Ascending aorta (tissue), 2 donors: ENCODE measurements at regions of chrX and their contacts with region 1.

Region 1: GRCh38 chrX:150898343-150899190 is at the start of gene CD99L2:
- DNase-seq: peak; percentile 39 to 91
- H3K4me3 ChIP-seq: peak within 1 kb of the TSS; percentile 71 to 83
- H3K27ac ChIP-seq: peak within 1 kb of the TSS; percentile 65 to 71
- H3K4me1 ChIP-seq: no peaks in the 10 kb centered on the region
- H3K27me3 ChIP-seq: no peaks in the 10 kb centered on the region
- CTCF ChIP-seq: no peak
- total RNA-seq, gene CD99L2: 83.4 TPM

Region 2: GRCh38 chrX:149938427-149939270 is 959.9 kb before region 1 on chrX and contains the start of gene EOLA2:
- intact Hi-C with region 1: loop called (anchors 10 kb)
- DNase-seq: peak; percentile 91 to 97
- H3K4me3 ChIP-seq: peak within 1 kb of the TSS; percentile 52 to 77
- H3K27ac ChIP-seq: peak within 1 kb of the TSS; percentile 91 to 96
- H3K4me1 ChIP-seq: peaks cover 0 to 4% of the 10 kb centered on the region in 2 donors
- H3K27me3 ChIP-seq: no peaks in the 10 kb centered on the region
- CTCF ChIP-seq: peak; percentile 36 to 56 (median 54)
- total RNA-seq, gene EOLA2: 22.8 TPM

Region 3: DNA sequence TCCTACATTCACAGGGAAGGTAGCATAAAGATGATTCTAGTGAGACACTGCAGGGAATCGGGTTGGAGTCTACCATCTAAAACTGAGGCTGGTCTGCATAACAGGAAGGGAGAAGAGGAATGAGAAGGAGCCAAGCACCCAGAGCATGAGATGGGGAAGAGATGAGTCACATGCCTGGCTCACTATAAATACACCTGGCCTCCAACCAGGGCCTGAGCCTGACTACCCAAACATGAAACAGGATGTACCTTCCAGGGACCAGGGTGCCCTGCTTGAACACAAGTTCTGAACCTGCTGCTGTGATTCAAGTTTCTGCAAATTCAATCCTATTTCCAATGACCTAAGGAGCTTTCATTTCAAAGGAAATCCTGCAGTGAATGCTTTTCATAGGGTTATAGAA is 25.0 kb before region 1 on chrX:
- intact Hi-C with region 1: loop called (anchors 2 kb)
- DNase-seq: peak; percentile 17 to 76
- H3K4me3 ChIP-seq: no peak overlapping the region
- H3K27ac ChIP-seq: peak overlapping the region; percentile 70 to 76
- H3K4me1 ChIP-seq: peaks cover 0 to 2% of the 10 kb centered on the region in 2 donors
- H3K27me3 ChIP-seq: no peaks in the 10 kb centered on the region
- CTCF ChIP-seq: no peak

Region 4: DNA sequence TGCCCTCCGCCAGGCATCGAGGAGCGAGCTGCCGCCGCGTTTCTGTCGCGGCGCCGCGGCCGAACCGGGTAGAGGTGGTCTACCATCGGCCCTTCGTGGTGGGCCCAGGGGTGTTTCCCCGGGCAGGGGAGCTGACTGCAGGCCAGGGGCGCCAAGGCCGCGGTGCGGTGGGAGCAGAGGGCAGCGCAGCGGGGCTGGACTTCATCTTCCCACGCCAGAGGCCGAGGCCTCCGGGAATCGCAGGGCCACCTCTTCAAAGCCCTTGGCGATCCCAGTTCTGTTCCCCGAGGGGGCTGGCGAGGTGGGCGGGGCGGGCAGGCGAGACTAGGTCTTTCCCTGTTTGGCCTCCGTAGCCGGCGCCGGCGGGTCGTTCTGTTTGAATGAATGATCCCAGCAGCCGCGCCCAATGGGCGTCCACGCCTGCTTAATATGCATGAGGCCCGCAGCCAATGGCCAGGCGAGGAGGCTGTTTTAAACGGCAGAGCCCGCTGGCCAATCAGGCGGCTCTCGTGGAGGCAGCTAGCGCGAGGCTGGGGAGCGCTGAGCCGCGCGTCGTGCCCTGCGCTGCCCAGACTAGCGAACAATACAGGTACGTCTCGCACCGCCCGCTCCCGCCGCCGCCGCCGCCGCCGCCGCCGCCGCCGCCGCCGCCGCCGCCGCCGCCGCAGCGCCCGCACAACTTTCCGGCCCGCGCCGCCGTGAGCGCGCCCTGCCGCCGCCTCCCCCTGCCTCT is 84.4 kb after region 1 on chrX and contains the start of gene HMGB3:
- intact Hi-C with region 1: loop called (anchors 1 kb)
- DNase-seq: peak; percentile 68 to 91
- H3K4me3 ChIP-seq: peak within 1 kb of the TSS; percentile 65 to 74
- H3K27ac ChIP-seq: no peak within 1 kb of the TSS
- H3K4me1 ChIP-seq: peaks cover 0 to 2% of the 10 kb centered on the region in 2 donors
- H3K27me3 ChIP-seq: no peaks in the 10 kb centered on the region
- CTCF ChIP-seq: no peak
- total RNA-seq, gene HMGB3: 0.21 TPM